CD8-positive, alpha-beta T cell (primary cell): ENCODE measurements at regions of chr19 and their contacts with region 1.

Region 1: GRCh38 chr19:42108527-42109389 is 23.5 kb downstream of the POU2F2 start:
- DNase-seq: peak; percentile 83 to 94 (median 91)
- ATAC-seq: peak; percentile 99
- H3K4me3 ChIP-seq: no peak overlapping the region
- H3K4me3 Mint-ChIP-seq: no peak overlapping the region
- H3K27ac ChIP-seq: no peak overlapping the region
- H3K27ac Mint-ChIP-seq: peak overlapping the region; percentile 20
- H3K4me1 ChIP-seq: peaks cover 4% of the 10 kb centered on the region
- H3K4me1 Mint-ChIP-seq: peaks cover 8% of the 10 kb centered on the region
- H3K27me3 ChIP-seq: no peaks in the 10 kb centered on the region
- H3K27me3 Mint-ChIP-seq: no peaks in the 10 kb centered on the region
- CTCF ChIP-seq: peak; percentile 100

Region 2: DNA sequence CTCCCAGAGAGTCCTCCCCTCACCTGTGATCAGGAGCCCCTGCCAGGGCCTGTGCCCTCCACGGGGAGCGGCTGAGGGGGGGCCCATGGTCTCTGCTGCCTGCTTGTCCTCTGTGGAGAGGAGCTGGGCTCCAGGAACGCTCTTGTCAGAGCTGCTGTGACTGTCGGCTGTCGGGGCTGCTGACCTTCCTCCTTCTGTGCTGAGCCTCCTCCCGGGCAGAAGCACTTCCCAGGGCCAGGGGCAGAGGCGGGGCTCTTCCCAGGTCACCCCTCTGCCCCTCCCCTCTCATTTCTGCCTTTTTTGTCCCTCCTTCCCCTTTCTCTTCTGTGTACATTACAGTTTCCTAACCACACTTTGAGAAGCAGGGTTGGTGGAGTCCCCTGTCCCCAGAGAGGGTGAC is 481.9 kb before region 1 on chr19 and contains the start of gene CEACAM4:
- CTCF ChIA-PET with region 1: no interaction called
- POLR2A ChIA-PET with region 1: no interaction called
- intact Hi-C with region 1: no loop called
- DNase-seq: peak in 1 of 9 experiments; percentile 17
- ATAC-seq: no peak
- H3K4me3 ChIP-seq: no peak within 1 kb of the TSS
- H3K4me3 Mint-ChIP-seq: no peak within 1 kb of the TSS
- H3K27ac ChIP-seq: no peak within 1 kb of the TSS
- H3K27ac Mint-ChIP-seq: no peak within 1 kb of the TSS
- H3K4me1 ChIP-seq: no peaks in the 10 kb centered on the region
- H3K4me1 Mint-ChIP-seq: no peaks in the 10 kb centered on the region
- H3K27me3 ChIP-seq: peaks cover 0 to 5% of the 10 kb centered on the region in 2 experiments
- H3K27me3 Mint-ChIP-seq: peaks cover 32% of the 10 kb centered on the region
- CTCF ChIP-seq: no peak
- total RNA-seq, gene CEACAM4: not detected

Region 3: DNA sequence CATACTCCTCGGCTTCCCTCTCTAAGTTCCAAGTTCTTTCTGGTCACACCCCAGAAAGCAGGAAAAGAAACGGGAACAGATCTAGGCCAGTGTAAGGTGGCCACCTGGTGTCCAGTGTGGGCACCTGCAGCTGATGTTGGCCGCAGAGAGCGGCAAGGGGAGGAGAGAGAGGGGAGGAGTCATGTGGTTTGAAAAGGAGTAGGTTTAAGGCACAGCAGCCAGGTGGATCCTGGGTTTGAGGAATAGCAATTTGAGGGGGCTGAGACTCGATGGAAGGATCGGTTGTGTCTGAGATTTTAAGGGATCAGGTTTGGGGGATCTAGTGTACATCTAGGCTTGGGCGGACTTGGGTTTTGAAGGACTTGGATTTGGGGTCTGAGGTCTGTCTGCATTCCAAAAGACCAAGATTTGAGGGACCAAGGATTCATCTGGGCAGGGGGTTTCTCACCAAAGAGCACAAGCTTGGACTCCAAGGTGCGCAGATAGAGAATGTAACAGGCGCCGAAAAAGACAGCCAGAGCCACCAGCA is 150.9 kb before region 1 on chr19:
- CTCF ChIA-PET with region 1: no interaction called
- POLR2A ChIA-PET with region 1: no interaction called
- intact Hi-C with region 1: no loop called
- DNase-seq: peak in 5 of 9 experiments; percentile 40 to 73 (median 51)
- ATAC-seq: no peak
- H3K4me3 ChIP-seq: peak overlapping the region; percentile 80 to 91
- H3K4me3 Mint-ChIP-seq: peak overlapping the region; percentile 97
- H3K27ac ChIP-seq: peak overlapping the region in 1 of 2 experiments; percentile 82
- H3K27ac Mint-ChIP-seq: peak overlapping the region; percentile 90
- H3K4me1 ChIP-seq: peaks cover 16% of the 10 kb centered on the region
- H3K4me1 Mint-ChIP-seq: peaks cover 23% of the 10 kb centered on the region
- H3K27me3 ChIP-seq: no peaks in the 10 kb centered on the region
- H3K27me3 Mint-ChIP-seq: no peaks in the 10 kb centered on the region
- CTCF ChIP-seq: peak; percentile 42

Region 4: DNA sequence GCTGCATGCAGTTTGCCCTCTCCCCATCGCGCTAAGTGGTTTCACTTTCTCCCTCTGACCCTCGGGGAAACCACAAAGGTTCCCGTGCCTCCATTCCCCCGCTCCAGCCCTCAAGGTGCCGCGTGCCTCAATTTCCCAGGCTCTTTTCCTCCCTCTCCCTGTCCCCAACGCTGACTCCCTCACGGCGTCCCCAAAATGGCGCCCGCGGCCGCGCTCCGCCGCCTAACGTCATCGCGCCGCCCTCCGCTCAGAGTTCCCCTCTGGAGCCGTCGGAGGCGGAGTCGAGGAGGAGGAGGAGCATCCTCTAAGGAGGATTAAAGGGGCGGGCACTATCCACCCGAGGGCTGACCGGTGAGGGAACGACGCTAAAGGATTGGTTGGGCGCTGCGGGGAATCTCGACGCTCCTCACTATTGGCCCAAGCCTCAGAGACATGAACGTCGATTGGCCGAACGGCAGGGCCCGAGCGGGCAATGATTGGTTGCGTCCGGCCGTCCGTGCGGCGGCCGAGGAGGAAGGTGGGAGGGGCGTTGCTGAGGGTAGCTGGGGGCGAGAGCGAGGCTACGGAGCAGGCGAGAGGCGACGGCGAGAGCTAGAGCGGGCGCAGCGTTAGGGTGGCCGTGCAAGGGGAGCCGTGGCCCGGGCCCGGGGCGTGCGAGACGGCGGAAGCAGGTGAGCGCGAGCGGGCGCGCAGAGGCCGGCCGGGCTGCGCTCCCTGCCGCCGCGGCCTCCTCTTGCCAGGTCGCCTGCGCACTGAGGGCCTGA is 33.0 kb before region 1 on chr19 and contains the start of gene ZNF574:
- CTCF ChIA-PET with region 1: interaction called, 11 read pairs
- POLR2A ChIA-PET with region 1: interaction called, 3 read pairs
- intact Hi-C with region 1: no loop called
- DNase-seq: peak; percentile 97 to 100 (median 98)
- ATAC-seq: peak; percentile 95
- H3K4me3 ChIP-seq: peak within 1 kb of the TSS; percentile 72 to 76
- H3K4me3 Mint-ChIP-seq: peak within 1 kb of the TSS; percentile 97
- H3K27ac ChIP-seq: peak within 1 kb of the TSS; percentile 94 to 100
- H3K27ac Mint-ChIP-seq: peak within 1 kb of the TSS; percentile 99
- H3K4me1 ChIP-seq: peaks cover 21% of the 10 kb centered on the region
- H3K4me1 Mint-ChIP-seq: peaks cover 37% of the 10 kb centered on the region
- H3K27me3 ChIP-seq: no peaks in the 10 kb centered on the region
- H3K27me3 Mint-ChIP-seq: no peaks in the 10 kb centered on the region
- CTCF ChIP-seq: no peak
- total RNA-seq, gene ZNF574: 25.0 to 26.2 TPM

Region 5: DNA sequence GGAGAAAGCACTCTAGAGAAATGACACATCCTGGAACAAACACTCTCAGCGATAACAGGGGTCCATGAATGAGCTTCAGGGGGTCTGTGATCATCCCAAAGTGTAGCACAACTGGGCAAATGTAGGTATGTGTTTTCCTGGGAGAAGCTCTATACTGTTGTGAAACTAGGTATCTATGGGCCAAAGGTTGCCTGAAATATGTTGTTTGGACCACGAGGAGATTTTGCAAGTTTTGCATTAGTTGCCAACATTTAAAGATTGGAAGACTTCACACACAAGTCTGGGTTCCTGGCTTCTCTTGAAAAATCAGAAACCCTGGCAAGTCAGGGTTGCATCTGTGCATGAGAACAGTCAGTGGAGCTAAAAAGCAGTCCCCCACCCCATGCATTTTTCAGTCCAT is 50.2 kb after region 1 on chr19:
- CTCF ChIA-PET with region 1: interaction called, 13 read pairs
- POLR2A ChIA-PET with region 1: no interaction called
- intact Hi-C with region 1: no loop called
- DNase-seq: no peak
- ATAC-seq: no peak
- H3K4me3 ChIP-seq: no peak overlapping the region
- H3K4me3 Mint-ChIP-seq: no peak overlapping the region
- H3K27ac ChIP-seq: no peak overlapping the region
- H3K27ac Mint-ChIP-seq: no peak overlapping the region
- H3K4me1 ChIP-seq: peaks cover 13% of the 10 kb centered on the region
- H3K4me1 Mint-ChIP-seq: peaks cover 13% of the 10 kb centered on the region
- H3K27me3 ChIP-seq: no peaks in the 10 kb centered on the region
- H3K27me3 Mint-ChIP-seq: no peaks in the 10 kb centered on the region
- CTCF ChIP-seq: no peak

Region 6: DNA sequence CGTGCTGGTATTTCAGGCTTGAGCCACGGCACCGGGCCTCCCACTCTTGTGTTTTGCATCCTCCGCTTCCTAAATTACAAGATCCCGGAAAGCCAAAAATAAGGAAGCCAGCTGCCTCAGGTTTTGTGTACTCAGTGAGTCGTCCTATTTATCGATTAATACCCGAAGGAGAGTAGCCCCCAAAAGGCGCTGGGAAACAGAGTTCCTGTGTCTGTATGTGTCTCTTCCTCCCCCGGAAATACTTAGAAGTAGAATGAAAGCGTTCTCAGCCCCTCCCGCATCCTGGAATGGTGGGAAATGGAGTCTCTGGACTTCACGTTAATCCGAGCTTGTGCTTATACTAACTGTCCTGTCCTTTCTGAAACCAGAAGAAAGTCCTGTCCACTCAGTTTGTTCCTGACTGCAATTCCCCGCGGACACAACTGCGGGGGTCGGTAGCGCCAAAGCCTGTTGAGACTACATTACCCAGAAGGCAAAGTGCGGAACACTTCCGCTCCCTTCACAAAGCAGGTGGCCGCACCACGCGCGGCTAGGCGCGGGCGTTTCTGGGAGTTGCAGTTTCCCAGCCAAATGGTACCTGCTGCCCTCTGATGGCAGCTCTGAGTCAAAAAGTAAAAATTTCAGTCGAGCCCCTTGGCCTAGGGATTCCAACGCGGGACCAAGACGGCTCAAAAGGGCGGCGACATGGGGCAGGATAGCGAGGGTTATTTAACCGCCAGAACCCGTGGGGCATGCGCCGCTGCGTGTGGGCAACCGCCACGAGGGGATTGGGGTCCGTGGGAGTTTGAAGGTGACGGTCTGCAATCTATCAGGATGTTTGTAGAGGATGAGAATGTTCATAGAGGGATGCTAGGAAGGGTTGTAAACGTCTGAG is 135.8 kb after region 1 on chr19:
- CTCF ChIA-PET with region 1: interaction called, 8 read pairs
- POLR2A ChIA-PET with region 1: no interaction called
- intact Hi-C with region 1: loop called in 1 of 2 experiments (anchors 1 kb)
- DNase-seq: peak; percentile 79 to 96 (median 91)
- ATAC-seq: peak; percentile 38
- H3K4me3 ChIP-seq: peak overlapping the region; percentile 68 to 85
- H3K4me3 Mint-ChIP-seq: peak overlapping the region; percentile 98
- H3K27ac ChIP-seq: peak overlapping the region; percentile 49 to 92
- H3K27ac Mint-ChIP-seq: peak overlapping the region; percentile 94
- H3K4me1 ChIP-seq: peaks cover 36% of the 10 kb centered on the region
- H3K4me1 Mint-ChIP-seq: peaks cover 50% of the 10 kb centered on the region
- H3K27me3 ChIP-seq: no peaks in the 10 kb centered on the region
- H3K27me3 Mint-ChIP-seq: no peaks in the 10 kb centered on the region
- CTCF ChIP-seq: peak; percentile 68

Region 7: DNA sequence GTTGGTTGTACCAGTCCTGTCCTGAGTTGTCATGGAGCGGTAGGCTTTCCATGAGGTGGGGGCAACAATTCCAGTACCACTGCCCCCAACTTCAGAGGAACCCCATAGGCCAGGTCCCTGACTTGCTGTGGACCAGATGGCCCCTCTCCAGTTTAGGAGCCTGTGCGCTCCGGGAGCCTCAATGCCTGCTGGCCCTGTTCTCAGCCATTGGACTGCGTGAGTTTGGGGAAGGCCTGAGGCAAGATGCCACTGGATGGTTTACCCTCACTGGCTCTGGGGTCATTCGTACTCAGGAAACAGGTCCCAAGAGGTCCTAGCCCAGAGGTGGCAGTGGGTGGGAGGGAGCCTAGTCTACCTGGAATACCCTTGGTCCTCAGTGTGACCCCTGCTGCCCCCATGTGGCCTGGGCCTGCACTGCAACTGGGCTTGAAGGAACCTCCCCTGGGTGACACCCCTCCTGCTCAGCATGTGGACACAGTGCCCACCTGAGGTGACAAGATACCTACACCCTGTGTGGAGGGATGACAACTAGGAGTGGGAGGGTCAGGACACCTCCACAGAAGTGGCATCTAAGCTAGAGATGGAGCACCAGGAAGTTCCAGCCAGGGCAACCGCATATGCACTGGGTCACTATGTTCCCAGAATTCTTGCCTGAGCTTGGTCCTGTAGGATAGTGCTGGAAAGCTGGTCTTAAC is 187.2 kb after region 1 on chr19:
- CTCF ChIA-PET with region 1: interaction called, 45 read pairs
- POLR2A ChIA-PET with region 1: no interaction called
- intact Hi-C with region 1: loop called (anchors 1 kb)
- DNase-seq: peak; percentile 85 to 95 (median 89)
- ATAC-seq: peak; percentile 100
- H3K4me3 ChIP-seq: no peak overlapping the region
- H3K4me3 Mint-ChIP-seq: no peak overlapping the region
- H3K27ac ChIP-seq: no peak overlapping the region
- H3K27ac Mint-ChIP-seq: no peak overlapping the region
- H3K4me1 ChIP-seq: peaks cover 8% of the 10 kb centered on the region
- H3K4me1 Mint-ChIP-seq: peaks cover 9% of the 10 kb centered on the region
- H3K27me3 ChIP-seq: no peaks in the 10 kb centered on the region
- H3K27me3 Mint-ChIP-seq: no peaks in the 10 kb centered on the region
- CTCF ChIP-seq: peak; percentile 96

Region 8: DNA sequence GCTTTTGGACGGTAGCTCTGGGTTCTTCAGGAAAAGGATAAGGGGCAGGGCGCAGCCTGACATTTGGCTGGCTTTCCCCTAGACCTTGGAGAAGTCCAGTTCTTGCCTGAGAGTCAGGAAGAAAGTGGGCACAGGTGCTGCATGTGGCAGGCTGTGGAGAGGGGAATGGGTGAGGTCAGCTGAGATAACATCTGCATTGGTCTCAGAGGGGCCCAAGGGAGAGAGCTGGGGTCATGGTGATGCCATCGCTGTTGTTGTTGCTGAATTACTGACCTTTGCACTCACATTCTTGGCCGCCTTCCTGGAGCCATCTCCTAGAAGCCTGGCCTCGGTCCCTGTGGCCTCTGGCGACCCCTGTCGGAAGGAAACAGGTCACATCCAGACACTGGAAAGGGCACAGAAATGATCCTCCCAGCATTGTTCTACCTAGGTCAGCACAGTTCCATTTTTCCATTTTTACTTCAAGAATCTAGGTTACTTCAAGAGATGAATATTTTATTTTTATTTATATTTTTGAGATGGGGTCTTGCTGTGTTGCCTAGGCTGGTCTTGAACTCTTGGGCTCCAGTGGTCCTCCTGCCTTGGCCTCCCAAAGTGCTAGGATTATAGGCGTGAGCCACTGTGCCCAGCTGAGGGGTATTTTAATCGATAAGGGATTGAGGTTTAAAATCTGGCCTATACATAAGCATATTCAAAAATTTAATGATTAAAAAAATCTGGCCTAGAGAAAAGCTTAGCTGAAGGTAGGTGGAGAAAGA is 324.9 kb after region 1 on chr19:
- CTCF ChIA-PET with region 1: interaction called, 12 read pairs
- POLR2A ChIA-PET with region 1: no interaction called
- intact Hi-C with region 1: loop called (anchors 1 to 2 kb)
- DNase-seq: peak; percentile 32 to 77 (median 66)
- ATAC-seq: peak; percentile 43
- H3K4me3 ChIP-seq: no peak overlapping the region
- H3K4me3 Mint-ChIP-seq: no peak overlapping the region
- H3K27ac ChIP-seq: no peak overlapping the region
- H3K27ac Mint-ChIP-seq: no peak overlapping the region
- H3K4me1 ChIP-seq: no peaks in the 10 kb centered on the region
- H3K4me1 Mint-ChIP-seq: peaks cover 4% of the 10 kb centered on the region
- H3K27me3 ChIP-seq: no peaks in the 10 kb centered on the region
- H3K27me3 Mint-ChIP-seq: no peaks in the 10 kb centered on the region
- CTCF ChIP-seq: peak; percentile 62